Esophagus squamous epithelium (tissue), 5 donors: ENCODE measurements at regions of chr2 and their contacts with region 1.

Region 1: GRCh38 chr2:86079981-86080911 is 25.4 kb downstream of the POLR1A start:
- DNase-seq: peak; percentile 21
- H3K4me3 ChIP-seq: no peak overlapping the region
- H3K27ac ChIP-seq: peak overlapping the region in 1 of 4 donors; percentile 26
- H3K4me1 ChIP-seq: peaks cover 0 to 15% (median 0%) of the 10 kb centered on the region in 3 donors
- H3K27me3 ChIP-seq: no peaks in the 10 kb centered on the region
- CTCF ChIP-seq: peak; percentile 64 to 83 (median 78)
- POLR2A ChIP-seq: no peak

Region 2: DNA sequence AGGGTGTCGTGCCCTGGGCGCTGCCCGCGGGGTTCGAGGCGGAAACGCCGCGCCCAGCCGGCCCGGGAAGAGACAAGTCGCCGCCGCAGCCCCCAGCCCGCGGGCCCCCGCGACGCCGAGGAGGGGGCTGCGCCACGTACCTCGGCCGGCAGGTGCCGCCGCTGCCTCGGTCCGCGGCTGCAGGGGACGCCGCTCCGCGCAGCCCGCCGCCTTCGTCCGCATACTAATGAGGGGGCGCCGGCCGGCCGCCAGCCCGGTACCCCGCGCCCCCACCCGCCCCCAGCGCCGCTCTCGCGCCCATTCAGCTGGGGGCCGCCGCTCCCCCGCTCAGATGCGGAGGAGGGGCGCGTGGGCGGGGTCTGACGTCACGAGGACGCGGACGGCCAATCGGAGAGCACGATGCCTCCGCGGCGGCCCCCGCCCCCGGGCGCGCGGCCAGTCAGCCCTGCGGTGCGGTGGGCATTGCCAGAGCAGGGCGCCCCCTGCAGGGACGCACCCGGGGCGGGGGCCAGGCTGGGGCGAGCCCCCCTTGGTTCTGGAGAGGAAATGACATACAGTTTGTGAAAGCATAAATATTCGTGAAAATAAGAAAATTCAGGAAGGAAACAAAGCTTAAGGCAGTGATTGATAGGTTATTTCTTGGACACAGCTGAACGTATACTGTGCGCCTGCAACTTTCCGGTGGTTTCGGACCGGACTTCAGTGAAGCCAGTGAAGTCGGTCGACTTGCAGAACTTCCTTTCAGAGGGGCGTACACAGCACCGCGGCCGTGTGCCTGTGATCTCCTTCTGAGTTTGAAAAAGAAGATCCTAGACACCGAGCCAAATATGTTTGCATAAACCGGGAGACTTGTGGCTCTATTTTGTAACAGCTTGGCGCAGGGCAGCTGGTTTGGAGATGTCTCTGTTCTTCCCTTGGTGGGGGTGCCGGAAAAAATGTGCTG is 191.3 kb before region 1 on chr2 and contains the start of gene ST3GAL5:
- intact Hi-C with region 1: loop called (anchors 10 kb)
- DNase-seq: peak; percentile 56
- H3K4me3 ChIP-seq: peak within 1 kb of the TSS; percentile 51 to 89 (median 71)
- H3K27ac ChIP-seq: peak within 1 kb of the TSS; percentile 77 to 93 (median 86)
- H3K4me1 ChIP-seq: peaks cover 19 to 76% (median 33%) of the 10 kb centered on the region in 3 donors
- H3K27me3 ChIP-seq: peaks cover 0 to 15% (median 0%) of the 10 kb centered on the region in 4 donors
- CTCF ChIP-seq: peak in 5 of 6 experiments; percentile 49 to 58 (median 53)
- POLR2A ChIP-seq: peak in 2 of 4 donors; percentile 45 to 54
- total RNA-seq, gene ST3GAL5: 1.3 to 13.5 (median 5.2) TPM

Region 3: GRCh38 chr2:86135653-86136052 is 55.4 kb after region 1 on chr2:
- intact Hi-C with region 1: no loop called
- DNase-seq: no peak
- H3K4me3 ChIP-seq: no peak overlapping the region
- H3K27ac ChIP-seq: no peak overlapping the region
- H3K4me1 ChIP-seq: no peaks in the 10 kb centered on the region
- H3K27me3 ChIP-seq: no peaks in the 10 kb centered on the region
- CTCF ChIP-seq: no peak
- POLR2A ChIP-seq: no peak